Sigmoid colon (tissue), 7 donors: ENCODE measurements at regions of chr22 and their contacts with region 1.

Region 1: DNA sequence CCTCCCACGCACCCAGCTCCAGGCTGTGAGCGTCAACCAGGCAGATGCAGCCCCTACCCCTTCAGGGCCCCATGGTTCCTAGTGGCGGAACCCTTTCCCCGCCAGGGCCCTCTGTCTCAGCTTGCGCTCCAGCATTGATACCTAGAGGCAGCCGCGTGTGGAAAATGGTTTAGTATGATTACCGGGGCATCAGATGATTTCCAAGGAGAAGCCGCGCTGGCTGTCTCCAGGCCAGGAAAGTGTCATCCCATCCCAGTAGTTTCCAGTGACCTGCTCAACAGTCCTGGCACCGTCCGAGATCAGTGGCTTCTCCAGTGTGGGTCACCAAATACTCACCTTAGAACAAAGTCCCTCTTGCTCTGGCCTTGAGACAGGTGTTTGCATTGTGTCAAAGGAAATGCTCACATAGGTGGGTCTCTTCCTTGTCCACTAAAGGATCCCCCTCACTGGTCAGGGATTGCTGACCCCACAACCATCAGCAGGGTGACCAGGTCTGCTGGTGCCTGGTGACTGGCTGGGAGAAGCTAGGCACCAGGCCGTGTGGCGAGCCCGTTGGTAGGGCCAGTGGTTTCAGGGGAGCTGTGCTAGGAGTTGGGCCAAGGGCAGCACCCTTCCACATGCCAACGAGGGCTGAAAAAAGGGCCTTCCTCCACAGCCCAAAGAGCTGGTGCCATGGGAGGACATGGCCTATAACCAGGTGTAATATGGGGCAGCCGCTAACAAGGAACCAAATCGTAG is 109.4 kb downstream of the MORC2 start:
- DNase-seq: no peak
- H3K4me3 ChIP-seq: no peak overlapping the region
- H3K27ac ChIP-seq: no peak overlapping the region
- H3K4me1 ChIP-seq: no peaks in the 10 kb centered on the region
- H3K27me3 ChIP-seq: no peaks in the 10 kb centered on the region
- CTCF ChIP-seq: no peak
- EP300 ChIP-seq: no peak
- POLR2A ChIP-seq: no peak

Region 2: DNA sequence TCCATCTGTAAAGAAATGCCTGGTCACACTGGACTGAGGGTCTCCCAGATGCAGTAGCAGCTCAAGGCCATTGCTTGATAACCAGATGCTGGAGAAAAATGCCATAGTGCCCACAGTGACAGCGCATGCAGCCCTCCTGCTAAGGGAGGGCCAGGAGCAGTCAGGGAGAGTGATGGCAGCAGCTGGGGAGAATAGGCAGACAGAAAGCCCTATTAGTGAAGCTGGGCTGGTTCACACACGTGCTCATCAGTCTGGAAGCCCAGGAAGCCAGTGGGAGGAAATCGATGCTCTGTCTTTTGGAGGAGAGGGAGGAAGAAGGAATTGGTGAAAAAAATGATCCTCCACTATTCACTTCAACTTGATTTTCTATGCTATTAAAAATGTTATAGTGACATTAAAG is 81.6 kb before region 1 on chr22:
- intact Hi-C with region 1: loop called (anchors 10 kb)
- DNase-seq: no peak
- H3K4me3 ChIP-seq: no peak overlapping the region
- H3K27ac ChIP-seq: no peak overlapping the region
- H3K4me1 ChIP-seq: no peaks in the 10 kb centered on the region
- H3K27me3 ChIP-seq: no peaks in the 10 kb centered on the region
- CTCF ChIP-seq: no peak
- EP300 ChIP-seq: no peak
- POLR2A ChIP-seq: no peak

Region 3: DNA sequence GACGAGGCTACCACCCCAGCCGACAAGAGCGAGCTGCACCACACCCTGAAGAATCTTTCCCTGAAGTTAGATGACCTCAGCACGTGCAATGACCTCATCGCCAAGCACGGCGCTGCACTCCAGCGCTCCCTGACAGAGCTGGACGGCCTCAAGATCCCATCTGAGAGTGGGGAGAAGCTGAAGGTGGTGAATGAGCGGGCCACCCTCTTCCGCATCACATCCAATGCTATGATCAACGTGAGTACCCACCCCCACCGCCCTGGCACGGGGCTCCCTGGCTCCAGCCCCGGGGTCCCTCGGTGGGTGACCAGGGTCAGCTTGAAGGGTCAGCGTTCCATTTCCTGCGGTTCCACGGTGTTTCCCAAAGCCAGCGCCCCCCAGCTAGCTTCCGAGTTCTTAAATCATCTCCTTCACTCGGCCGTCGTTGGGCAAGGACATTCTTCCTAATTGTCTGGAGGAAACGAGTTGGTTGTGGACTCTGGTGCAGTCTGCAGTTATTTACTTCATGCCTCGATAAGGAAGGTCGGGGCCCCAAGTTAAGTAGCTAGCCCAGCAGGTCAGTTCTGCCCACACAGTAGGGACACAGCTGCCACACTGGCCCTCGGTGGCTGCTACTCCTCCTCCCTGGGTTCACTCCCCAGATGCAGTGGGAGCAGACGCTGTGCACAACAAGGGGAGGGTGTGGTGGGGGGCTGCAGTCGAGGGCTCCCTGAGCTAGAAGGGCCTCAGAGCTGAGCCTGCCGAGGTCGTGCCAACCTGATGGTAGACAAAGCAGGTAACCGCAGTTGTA is 11.5 kb after region 1 on chr22:
- intact Hi-C with region 1: no loop called
- DNase-seq: peak; percentile 50
- H3K4me3 ChIP-seq: no peak overlapping the region
- H3K27ac ChIP-seq: no peak overlapping the region
- H3K4me1 ChIP-seq: no peaks in the 10 kb centered on the region
- H3K27me3 ChIP-seq: no peaks in the 10 kb centered on the region
- CTCF ChIP-seq: no peak
- EP300 ChIP-seq: no peak
- POLR2A ChIP-seq: no peak

Region 4: DNA sequence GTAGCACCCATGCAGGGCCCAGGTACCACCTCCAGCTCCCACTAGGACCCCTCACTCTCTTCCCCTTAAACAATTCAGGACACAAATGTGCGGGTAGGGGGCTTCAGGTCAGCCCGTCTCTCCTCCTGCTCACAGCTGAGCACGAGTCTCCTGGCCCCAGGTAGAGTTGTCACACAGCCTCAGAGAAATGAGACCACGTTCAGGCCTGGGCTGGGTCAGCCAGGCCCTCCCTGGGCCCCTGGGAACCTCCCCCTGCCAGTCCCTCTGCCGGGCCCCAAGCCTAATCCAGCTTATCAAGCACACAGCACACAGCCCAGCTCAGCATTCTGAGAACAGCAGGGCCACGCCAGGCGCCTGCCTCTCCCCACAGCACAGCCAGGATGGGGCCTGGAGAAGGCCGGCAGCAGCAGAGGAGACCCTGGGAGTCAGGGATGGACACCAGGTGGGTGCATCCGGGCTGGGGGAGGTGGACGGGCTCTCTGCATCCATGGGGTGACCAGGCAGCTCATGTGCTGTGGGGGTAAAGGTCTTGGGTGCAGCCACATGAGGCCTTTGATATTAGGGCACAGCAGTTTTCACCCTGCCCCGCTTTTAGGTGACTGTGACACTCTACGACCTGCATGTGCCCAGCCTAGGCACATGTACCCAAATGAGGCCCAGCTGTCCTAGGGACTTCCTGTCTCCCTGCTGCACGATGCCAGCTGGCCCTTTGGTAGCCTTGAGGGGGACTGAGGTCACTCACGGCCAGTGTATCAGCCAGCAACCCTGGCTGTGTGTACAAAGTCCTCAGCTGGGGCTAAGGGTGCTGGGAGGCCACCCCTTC is 22.4 kb after region 1 on chr22:
- intact Hi-C with region 1: no loop called
- DNase-seq: no peak
- H3K4me3 ChIP-seq: no peak overlapping the region
- H3K27ac ChIP-seq: no peak overlapping the region
- H3K4me1 ChIP-seq: no peaks in the 10 kb centered on the region
- H3K27me3 ChIP-seq: no peaks in the 10 kb centered on the region
- CTCF ChIP-seq: no peak
- EP300 ChIP-seq: no peak
- POLR2A ChIP-seq: no peak